B cell (primary cell): ENCODE measurements at regions of chr6 and their contacts with region 1.

Region 1: DNA sequence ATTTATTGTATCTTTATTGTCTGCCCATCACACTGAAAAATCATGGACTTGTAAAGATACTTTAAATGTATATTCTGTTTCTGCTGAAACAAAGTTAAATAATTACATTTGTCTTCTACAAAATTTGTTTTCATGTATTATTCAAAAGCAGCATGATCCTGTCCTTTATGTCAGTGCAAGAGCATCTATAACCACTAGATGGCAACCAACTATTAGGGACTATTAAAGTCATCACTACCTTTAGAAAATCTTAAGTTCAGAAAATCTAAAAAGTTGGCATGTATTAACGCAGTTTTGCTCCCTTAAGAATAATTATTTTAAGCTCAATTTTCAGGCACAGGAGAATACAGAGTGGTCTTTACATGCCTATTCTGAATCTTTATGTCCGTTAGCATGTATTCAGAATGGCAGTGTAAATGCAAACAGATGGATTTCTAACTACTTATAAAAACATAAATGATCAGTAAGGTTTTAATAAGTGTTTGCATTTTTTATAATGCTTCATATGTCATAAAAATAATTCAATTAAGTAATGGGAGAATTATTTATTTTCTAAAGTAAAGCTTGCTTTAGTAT is 17.8 kb downstream of the TMEM30A start:
- DNase-seq: peak; percentile 58
- ATAC-seq: peak; percentile 58
- H3K4me3 ChIP-seq: no peak overlapping the region
- H3K4me3 Mint-ChIP-seq: no peak overlapping the region
- H3K27ac ChIP-seq: no peak overlapping the region
- H3K27ac Mint-ChIP-seq: no peak overlapping the region
- H3K4me1 ChIP-seq: no peaks in the 10 kb centered on the region
- H3K4me1 Mint-ChIP-seq: peaks cover 10% of the 10 kb centered on the region
- H3K27me3 ChIP-seq: no peaks in the 10 kb centered on the region
- H3K27me3 Mint-ChIP-seq: no peaks in the 10 kb centered on the region
- CTCF ChIP-seq: peak; percentile 95

Region 2: GRCh38 chr6:75278474-75279077 is 11.8 kb after region 1 on chr6:
- CTCF ChIA-PET with region 1: interaction called, 14 read pairs
- POLR2A ChIA-PET with region 1: no interaction called
- intact Hi-C with region 1: loop called (anchors 2 kb)
- DNase-seq: no peak
- ATAC-seq: no peak
- H3K4me3 ChIP-seq: no peak overlapping the region
- H3K4me3 Mint-ChIP-seq: no peak overlapping the region
- H3K27ac ChIP-seq: no peak overlapping the region
- H3K27ac Mint-ChIP-seq: no peak overlapping the region
- H3K4me1 ChIP-seq: peaks cover 6 to 18% of the 10 kb centered on the region in 2 donors
- H3K4me1 Mint-ChIP-seq: peaks cover 52% of the 10 kb centered on the region
- H3K27me3 ChIP-seq: no peaks in the 10 kb centered on the region
- H3K27me3 Mint-ChIP-seq: no peaks in the 10 kb centered on the region
- CTCF ChIP-seq: no peak

Region 3: GRCh38 chr6:75412969-75413662 is 146.3 kb after region 1 on chr6:
- CTCF ChIA-PET with region 1: no interaction called
- POLR2A ChIA-PET with region 1: no interaction called
- intact Hi-C with region 1: no loop called
- DNase-seq: no peak
- ATAC-seq: no peak
- H3K4me3 ChIP-seq: no peak overlapping the region
- H3K4me3 Mint-ChIP-seq: no peak overlapping the region
- H3K27ac ChIP-seq: no peak overlapping the region
- H3K27ac Mint-ChIP-seq: no peak overlapping the region
- H3K4me1 ChIP-seq: no peaks in the 10 kb centered on the region
- H3K4me1 Mint-ChIP-seq: no peaks in the 10 kb centered on the region
- H3K27me3 ChIP-seq: peaks cover 0 to 6% (median 1%) of the 10 kb centered on the region in 4 experiments
- H3K27me3 Mint-ChIP-seq: peaks cover 11% of the 10 kb centered on the region
- CTCF ChIP-seq: no peak

Region 4: GRCh38 chr6:75546381-75546780 is 279.6 kb after region 1 on chr6:
- CTCF ChIA-PET with region 1: interaction called, 9 read pairs
- POLR2A ChIA-PET with region 1: no interaction called
- intact Hi-C with region 1: loop called (anchors 1 kb)
- DNase-seq: no peak
- ATAC-seq: no peak
- H3K4me3 ChIP-seq: no peak overlapping the region
- H3K4me3 Mint-ChIP-seq: no peak overlapping the region
- H3K27ac ChIP-seq: no peak overlapping the region
- H3K27ac Mint-ChIP-seq: no peak overlapping the region
- H3K4me1 ChIP-seq: no peaks in the 10 kb centered on the region
- H3K4me1 Mint-ChIP-seq: no peaks in the 10 kb centered on the region
- H3K27me3 ChIP-seq: no peaks in the 10 kb centered on the region
- H3K27me3 Mint-ChIP-seq: no peaks in the 10 kb centered on the region
- CTCF ChIP-seq: peak; percentile 19